ENCODE measurements at regions of chr21 and their contacts with region 1.

Region 1: DNA sequence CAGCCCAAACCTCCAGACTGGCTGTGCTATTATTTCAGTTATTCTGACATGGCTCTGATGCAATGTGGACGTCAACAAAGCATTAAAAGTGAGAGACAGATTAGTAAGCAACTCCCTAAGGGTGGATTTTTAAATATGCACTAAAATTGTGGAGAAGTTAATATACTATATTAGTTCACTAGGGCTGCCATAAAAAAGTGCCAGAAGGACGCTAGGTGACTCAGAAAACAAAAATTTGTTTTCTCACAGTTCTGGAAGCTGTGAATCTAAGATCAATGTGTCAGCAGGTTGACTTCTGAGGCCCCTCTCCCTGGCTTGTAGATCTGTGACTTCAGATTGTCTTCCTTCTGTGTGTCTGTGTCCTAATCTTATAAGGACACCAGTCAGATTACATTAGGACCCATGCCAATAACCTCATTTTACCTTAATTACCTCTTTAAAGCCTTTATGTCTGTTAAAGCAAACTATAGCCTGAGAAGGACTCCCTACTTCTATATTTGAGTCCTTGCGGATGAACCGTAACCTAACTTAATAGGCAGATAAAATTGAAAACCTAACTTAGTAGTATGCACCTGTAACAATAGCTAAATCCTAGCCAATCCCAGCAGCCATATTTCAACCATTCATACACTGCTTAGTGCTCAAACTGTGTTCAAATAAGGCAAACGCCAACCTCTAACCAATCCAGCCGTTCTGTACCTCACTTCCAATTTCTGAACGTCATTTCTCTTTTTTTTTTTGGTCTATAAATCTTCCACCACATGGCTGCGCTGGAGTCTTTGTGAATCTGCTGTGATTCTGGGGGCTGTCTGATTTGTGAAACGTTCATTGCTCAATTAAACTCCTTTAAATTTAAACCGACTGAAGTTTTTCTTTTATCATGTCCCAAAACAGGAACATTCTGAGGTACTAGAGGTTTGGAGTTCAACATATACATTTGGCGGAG is 65.8 kb upstream of the BACH1 start:
- DNase-seq: no peak
- ATAC-seq: peak; percentile 42
- H3K4me3 ChIP-seq: 0 out of 2 replicates have a peak overlapping the region, but pooled peaks have one; percentile 2
- H3K27ac ChIP-seq: peak overlapping the region; percentile 87
- H3K4me1 ChIP-seq: peaks cover 69% of the 10 kb centered on the region
- H3K27me3 ChIP-seq: no peaks in the 10 kb centered on the region
- CTCF ChIP-seq: peak; percentile 16 to 43 (median 30); a peak in 3 of 6 replicates
- EP300 ChIP-seq: no peak
- POLR2A ChIP-seq: no peak
- RAD21 ChIP-seq: peak; percentile 68

Region 2: DNA sequence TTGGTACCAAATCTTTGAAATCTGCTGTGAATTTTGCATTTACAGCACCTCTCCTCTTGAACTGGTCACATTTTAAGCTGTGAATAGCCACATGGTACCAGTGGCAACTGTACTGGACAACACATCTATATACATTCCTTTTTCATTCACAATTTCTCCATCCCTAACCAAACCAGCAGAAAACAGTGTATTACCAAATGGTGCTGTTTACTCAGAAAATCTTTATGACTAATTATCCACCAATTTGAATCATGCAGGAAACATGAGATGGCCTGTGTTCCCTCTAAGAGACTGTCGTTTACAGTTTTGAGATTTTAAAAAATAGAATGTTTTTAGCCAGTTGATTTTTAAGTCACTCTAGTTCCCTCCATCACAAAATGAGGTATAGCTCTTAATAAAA is 141.8 kb before region 1 on chr21:
- CTCF ChIA-PET with region 1: interaction called, 7 read pairs
- POLR2A ChIA-PET with region 1: no interaction called
- RAD21 ChIA-PET with region 1: interaction called, 4 read pairs
- SMC1A ChIA-PET with region 1: interaction called, 12 read pairs
- in situ Hi-C with region 1: no loop called
- intact Hi-C with region 1: no loop called
- DNase-seq: no peak
- ATAC-seq: no peak
- H3K4me3 ChIP-seq: no peak overlapping the region
- H3K27ac ChIP-seq: no peak overlapping the region
- H3K4me1 ChIP-seq: no peaks in the 10 kb centered on the region
- H3K27me3 ChIP-seq: no peaks in the 10 kb centered on the region
- CTCF ChIP-seq: no peak
- EP300 ChIP-seq: no peak
- POLR2A ChIP-seq: no peak
- RAD21 ChIP-seq: no peak

Region 3: GRCh38 chr21:29195981-29196669 is 36.7 kb before region 1 on chr21:
- CTCF ChIA-PET with region 1: interaction called, 34 read pairs
- POLR2A ChIA-PET with region 1: interaction called, 10 read pairs
- RAD21 ChIA-PET with region 1: interaction called, 20 read pairs
- SMC1A ChIA-PET with region 1: interaction called, 42 read pairs
- in situ Hi-C with region 1: no loop called
- intact Hi-C with region 1: loop called (anchors 1 kb)
- DNase-seq: peak; percentile 90
- ATAC-seq: peak; percentile 99
- H3K4me3 ChIP-seq: peak overlapping the region; percentile 51; the same call in 1 of the 2 replicates
- H3K27ac ChIP-seq: peak overlapping the region; percentile 80
- H3K4me1 ChIP-seq: peaks cover 13% of the 10 kb centered on the region
- H3K27me3 ChIP-seq: no peaks in the 10 kb centered on the region
- CTCF ChIP-seq: peak; percentile 49 to 67 (median 62)
- EP300 ChIP-seq: peak; percentile 61 to 74; a peak in 2 of 4 replicates
- POLR2A ChIP-seq: 0 out of 2 replicates have a peak, but pooled peaks have one; percentile 37
- RAD21 ChIP-seq: peak; percentile 55

Region 4: GRCh38 chr21:29221253-29221744 is 11.6 kb before region 1 on chr21:
- CTCF ChIA-PET with region 1: interaction called, 6 read pairs
- POLR2A ChIA-PET with region 1: interaction called, 6 read pairs
- RAD21 ChIA-PET with region 1: interaction called, 11 read pairs
- SMC1A ChIA-PET with region 1: interaction called, 42 read pairs
- in situ Hi-C with region 1: no loop called
- intact Hi-C with region 1: no loop called
- DNase-seq: no peak
- ATAC-seq: no peak
- H3K4me3 ChIP-seq: no peak overlapping the region
- H3K27ac ChIP-seq: no peak overlapping the region
- H3K4me1 ChIP-seq: peaks cover 5% of the 10 kb centered on the region
- H3K27me3 ChIP-seq: no peaks in the 10 kb centered on the region
- CTCF ChIP-seq: no peak
- EP300 ChIP-seq: no peak
- POLR2A ChIP-seq: no peak
- RAD21 ChIP-seq: no peak

Region 5: DNA sequence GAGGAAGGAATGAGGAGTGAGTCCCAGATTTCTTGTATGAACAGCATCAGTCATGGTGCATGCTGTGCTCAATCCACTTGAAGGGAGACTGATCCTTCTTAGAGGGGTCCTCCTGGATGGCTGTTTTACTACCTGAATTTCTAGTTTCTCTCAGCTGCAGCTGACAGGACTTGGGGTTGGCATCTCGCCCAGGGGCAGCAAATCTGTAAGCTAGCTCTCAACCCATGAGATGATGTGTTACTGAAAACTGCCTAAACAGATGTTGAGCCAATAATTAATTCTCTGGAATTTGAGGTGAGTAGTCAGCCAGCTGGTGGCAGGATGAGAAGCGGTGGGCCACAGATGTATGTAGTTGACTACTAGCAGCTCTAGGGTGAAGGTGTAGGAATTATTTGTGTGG is 85.5 kb after region 1 on chr21:
- CTCF ChIA-PET with region 1: no interaction called
- POLR2A ChIA-PET with region 1: interaction called, 3 read pairs
- RAD21 ChIA-PET with region 1: interaction called, 13 read pairs
- SMC1A ChIA-PET with region 1: interaction called, 4 read pairs
- in situ Hi-C with region 1: no loop called
- intact Hi-C with region 1: no loop called
- DNase-seq: no peak
- ATAC-seq: no peak; the same call in 2 of the 3 replicates
- H3K4me3 ChIP-seq: no peak overlapping the region
- H3K27ac ChIP-seq: no peak overlapping the region
- H3K4me1 ChIP-seq: no peaks in the 10 kb centered on the region
- H3K27me3 ChIP-seq: no peaks in the 10 kb centered on the region
- CTCF ChIP-seq: no peak
- EP300 ChIP-seq: no peak
- POLR2A ChIP-seq: no peak
- RAD21 ChIP-seq: no peak

Measured in GM12878 (cell line).